Endothelial cell of umbilical vein (primary cell): ENCODE measurements at regions of chr2 and their contacts with region 1.

Region 1: GRCh38 chr2:3379647-3380534 is at the start of gene TRAPPC12:
- DNase-seq: peak; percentile 84
- H3K4me3 ChIP-seq: peak within 1 kb of the TSS; percentile 40 to 83 (median 75)
- H3K27ac ChIP-seq: peak within 1 kb of the TSS; percentile 74
- H3K4me1 ChIP-seq: peaks cover 26% of the 10 kb centered on the region
- H3K27me3 ChIP-seq: no peaks in the 10 kb centered on the region
- CTCF ChIP-seq: peak; percentile 31 to 53
- POLR2A ChIP-seq: peak; percentile 93
- total RNA-seq, gene TRAPPC12: 74.5 and 81.5 TPM in 2 replicates

Region 2: GRCh38 chr2:3282056-3282998 is 97.6 kb before region 1 on chr2:
- CTCF ChIA-PET with region 1: no interaction called
- POLR2A ChIA-PET with region 1: no interaction called
- dilution Hi-C with region 1: no loop called
- intact Hi-C with region 1: no loop called
- DNase-seq: no peak
- H3K4me3 ChIP-seq: no peak overlapping the region
- H3K27ac ChIP-seq: no peak overlapping the region
- H3K4me1 ChIP-seq: no peaks in the 10 kb centered on the region
- H3K27me3 ChIP-seq: no peaks in the 10 kb centered on the region
- CTCF ChIP-seq: no peak
- POLR2A ChIP-seq: no peak

Region 3: DNA sequence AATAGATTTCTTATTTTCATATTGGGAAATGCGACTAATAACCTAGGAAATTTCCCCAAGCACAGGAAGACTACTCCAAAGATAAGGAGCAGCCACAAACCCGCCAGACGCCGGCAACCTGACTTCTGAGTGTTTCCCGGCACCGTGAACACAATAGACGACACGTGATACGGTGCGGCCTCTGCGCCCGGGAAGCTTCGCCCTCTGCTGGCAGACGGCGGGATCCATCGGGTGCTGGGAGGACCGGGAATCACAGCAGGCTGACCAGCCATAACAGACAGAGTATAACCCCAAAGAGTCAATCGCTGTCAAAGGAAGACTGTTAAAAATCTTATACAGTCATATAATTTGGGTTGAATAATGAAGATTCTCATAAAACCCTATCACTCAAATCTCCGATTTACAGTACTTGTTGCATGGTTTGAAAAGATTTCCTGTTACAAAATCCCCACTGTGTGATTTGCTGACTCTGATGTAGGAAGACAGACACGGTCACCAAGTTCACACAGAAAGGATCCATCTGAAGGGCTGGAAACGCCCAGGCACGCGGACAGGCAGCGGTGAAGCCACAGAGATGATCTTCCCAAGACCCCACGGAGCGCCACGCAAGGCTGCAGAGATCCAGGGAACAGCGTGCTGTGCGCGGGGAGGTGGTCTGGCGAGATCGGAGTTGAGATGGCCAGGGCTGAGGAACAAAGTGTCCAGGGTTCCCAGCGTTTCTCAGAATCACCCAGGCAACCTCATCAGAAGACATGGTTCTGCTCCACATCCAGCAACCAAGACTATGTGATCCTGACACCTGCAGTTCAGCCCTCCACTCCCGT is 76.1 kb before region 1 on chr2:
- CTCF ChIA-PET with region 1: no interaction called
- POLR2A ChIA-PET with region 1: no interaction called
- dilution Hi-C with region 1: no loop called
- intact Hi-C with region 1: loop called (anchors 5 kb)
- DNase-seq: peak; percentile 85
- H3K4me3 ChIP-seq: no peak overlapping the region
- H3K27ac ChIP-seq: peak overlapping the region; percentile 29
- H3K4me1 ChIP-seq: peaks cover 3% of the 10 kb centered on the region
- H3K27me3 ChIP-seq: no peaks in the 10 kb centered on the region
- CTCF ChIP-seq: peak; percentile 92 to 93
- POLR2A ChIP-seq: no peak

Region 4: GRCh38 chr2:3518496-3519254 is 138.8 kb after region 1 on chr2:
- CTCF ChIA-PET with region 1: no interaction called
- POLR2A ChIA-PET with region 1: no interaction called
- dilution Hi-C with region 1: no loop called
- intact Hi-C with region 1: loop called (anchors 2 kb)
- DNase-seq: peak; percentile 100
- H3K4me3 ChIP-seq: peak overlapping the region; percentile 66 to 89 (median 89)
- H3K27ac ChIP-seq: peak overlapping the region; percentile 60
- H3K4me1 ChIP-seq: peaks cover 24% of the 10 kb centered on the region
- H3K27me3 ChIP-seq: no peaks in the 10 kb centered on the region
- CTCF ChIP-seq: no peak
- POLR2A ChIP-seq: peak; percentile 83

Region 5: GRCh38 chr2:3558205-3559014 is 178.5 kb after region 1 on chr2 and contains the start of gene RNASEH1:
- CTCF ChIA-PET with region 1: no interaction called
- POLR2A ChIA-PET with region 1: no interaction called
- dilution Hi-C with region 1: no loop called
- intact Hi-C with region 1: loop called (anchors 2 kb)
- DNase-seq: peak; percentile 99
- H3K4me3 ChIP-seq: peak within 1 kb of the TSS; percentile 65 to 96 (median 90)
- H3K27ac ChIP-seq: peak within 1 kb of the TSS; percentile 80
- H3K4me1 ChIP-seq: peaks cover 15% of the 10 kb centered on the region
- H3K27me3 ChIP-seq: no peaks in the 10 kb centered on the region
- CTCF ChIP-seq: no peak
- POLR2A ChIP-seq: peak; percentile 90
- total RNA-seq, gene RNASEH1: 30.8 and 31.4 TPM in 2 replicates

Region 6: GRCh38 chr2:3575534-3576262 is 195.8 kb after region 1 on chr2:
- CTCF ChIA-PET with region 1: no interaction called
- POLR2A ChIA-PET with region 1: interaction called, 3 read pairs
- dilution Hi-C with region 1: no loop called
- intact Hi-C with region 1: loop called (anchors 1 kb)
- DNase-seq: peak; percentile 27
- H3K4me3 ChIP-seq: peak overlapping the region; percentile 37 to 82 (median 73)
- H3K27ac ChIP-seq: peak overlapping the region; percentile 54
- H3K4me1 ChIP-seq: peaks cover 31% of the 10 kb centered on the region
- H3K27me3 ChIP-seq: no peaks in the 10 kb centered on the region
- CTCF ChIP-seq: no peak
- POLR2A ChIP-seq: no peak